Mammary epithelial cell (primary cell): ENCODE measurements at regions of chr2 and their contacts with region 1.

Region 1: DNA sequence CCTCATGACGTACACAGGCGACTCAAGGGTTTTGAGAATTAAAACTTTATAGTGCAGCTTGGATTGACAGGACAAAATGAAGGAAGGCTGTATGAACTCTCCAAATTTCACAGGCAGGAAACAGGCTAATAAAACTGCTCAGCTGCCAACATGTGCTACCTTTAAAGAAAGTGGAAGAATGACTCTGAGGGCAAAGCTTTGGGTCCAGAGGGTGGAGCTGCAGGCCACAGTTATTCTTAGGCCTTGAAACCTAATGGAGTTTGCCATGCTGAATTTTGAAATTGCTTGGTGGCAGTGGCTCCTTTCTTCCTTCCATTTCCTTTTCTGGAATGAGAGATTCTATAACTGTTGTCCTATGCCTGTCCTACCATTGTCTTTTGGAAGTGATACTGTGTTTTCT is 34.8 kb downstream of the HAT1 start:
- DNase-seq: peak; percentile 14
- H3K4me3 ChIP-seq: no peak overlapping the region
- H3K27ac ChIP-seq: no peak overlapping the region
- H3K4me1 ChIP-seq: peaks cover 10% of the 10 kb centered on the region
- H3K27me3 ChIP-seq: no peaks in the 10 kb centered on the region
- CTCF ChIP-seq: peak in 1 of 2 donors; percentile 45

Region 2: DNA sequence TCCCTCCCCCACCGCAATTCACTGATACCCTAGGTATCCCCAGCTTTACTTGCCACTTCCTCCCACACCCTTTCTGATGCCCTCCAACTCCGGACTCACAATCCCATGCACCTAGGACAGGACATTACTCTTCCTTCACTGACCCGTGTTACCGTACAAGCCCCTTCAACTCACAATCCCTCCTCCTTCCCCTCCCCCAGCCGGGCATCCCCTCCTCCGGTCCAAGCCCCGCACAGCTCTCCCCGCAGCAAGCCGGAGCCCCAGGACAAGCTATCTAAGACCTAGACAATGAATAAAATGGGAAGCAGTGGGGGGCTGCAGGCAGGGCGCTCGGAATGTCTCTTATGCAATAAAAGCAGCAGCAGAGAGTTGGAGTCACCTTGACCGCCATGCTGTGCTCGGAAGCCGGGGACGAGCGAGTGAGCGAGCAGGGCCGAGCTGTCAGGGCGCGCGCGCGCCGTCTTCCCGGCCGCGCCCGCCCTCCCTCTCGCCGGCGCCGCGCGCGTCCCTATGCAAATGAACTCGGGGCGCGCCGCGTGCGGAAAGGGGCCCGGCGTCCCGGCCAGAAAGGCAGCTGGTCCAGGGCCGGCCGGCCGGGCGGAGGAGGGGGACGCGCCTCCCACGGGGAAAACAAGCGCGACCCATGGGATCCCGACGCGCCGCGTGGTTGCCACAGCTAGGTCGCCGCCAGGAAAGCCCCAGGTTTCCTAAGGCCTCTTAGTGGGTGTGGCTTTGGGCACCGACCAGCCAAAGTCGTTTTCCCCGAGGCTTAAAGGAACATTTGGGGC is 63.0 kb before region 1 on chr2 and contains the start of gene SLC25A12:
- CTCF ChIA-PET with region 1: interaction called, 11 read pairs
- dilution Hi-C with region 1: no loop called
- in situ Hi-C with region 1: no loop called
- intact Hi-C with region 1: no loop called
- DNase-seq: peak; percentile 81
- H3K4me3 ChIP-seq: peak within 1 kb of the TSS; percentile 82 to 98 (median 90)
- H3K27ac ChIP-seq: peak within 1 kb of the TSS; percentile 79
- H3K4me1 ChIP-seq: peaks cover 4% of the 10 kb centered on the region
- H3K27me3 ChIP-seq: no peaks in the 10 kb centered on the region
- CTCF ChIP-seq: no peak
- total RNA-seq, gene SLC25A12: 18.6 to 22.8 TPM

Region 3: DNA sequence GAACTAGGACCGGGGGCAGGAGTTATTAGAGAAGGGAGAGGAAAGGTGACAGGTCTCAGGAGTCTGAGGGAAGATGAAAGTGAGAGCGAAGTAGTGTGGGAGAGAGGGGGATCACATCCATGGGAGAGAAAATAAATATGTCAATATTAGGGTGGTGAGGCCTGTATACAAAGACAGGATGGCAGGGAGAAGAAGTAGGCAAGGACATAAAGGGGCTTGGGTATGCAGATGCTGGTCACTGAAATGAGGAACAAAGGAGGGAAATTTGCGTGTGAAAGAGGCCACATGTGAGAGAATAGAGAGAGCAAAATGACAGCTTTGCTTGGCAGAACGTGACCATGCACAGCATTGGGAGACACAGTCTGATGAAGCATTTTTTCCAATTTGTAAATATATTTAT is 56.3 kb after region 1 on chr2:
- CTCF ChIA-PET with region 1: no interaction called
- dilution Hi-C with region 1: no loop called
- in situ Hi-C with region 1: no loop called
- intact Hi-C with region 1: no loop called
- DNase-seq: no peak
- H3K4me3 ChIP-seq: no peak overlapping the region
- H3K27ac ChIP-seq: no peak overlapping the region
- H3K4me1 ChIP-seq: peaks cover 5% of the 10 kb centered on the region
- H3K27me3 ChIP-seq: no peaks in the 10 kb centered on the region
- CTCF ChIP-seq: no peak

Region 4: GRCh38 chr2:172131713-172132555 is 174.9 kb after region 1 on chr2:
- CTCF ChIA-PET with region 1: interaction called, 3 read pairs
- dilution Hi-C with region 1: no loop called
- in situ Hi-C with region 1: no loop called
- intact Hi-C with region 1: loop called (anchors 1 kb)
- DNase-seq: no peak
- H3K4me3 ChIP-seq: no peak overlapping the region
- H3K27ac ChIP-seq: no peak overlapping the region
- H3K4me1 ChIP-seq: no peaks in the 10 kb centered on the region
- H3K27me3 ChIP-seq: no peaks in the 10 kb centered on the region
- CTCF ChIP-seq: no peak

Region 5: GRCh38 chr2:172172513-172173173 is 215.6 kb after region 1 on chr2:
- CTCF ChIA-PET with region 1: no interaction called
- dilution Hi-C with region 1: no loop called
- in situ Hi-C with region 1: no loop called
- intact Hi-C with region 1: no loop called
- DNase-seq: peak; percentile 66
- H3K4me3 ChIP-seq: peak overlapping the region; percentile 56 to 74 (median 64)
- H3K27ac ChIP-seq: peak overlapping the region; percentile 53
- H3K4me1 ChIP-seq: peaks cover 17% of the 10 kb centered on the region
- H3K27me3 ChIP-seq: no peaks in the 10 kb centered on the region
- CTCF ChIP-seq: peak; percentile 70 to 87